Aorta (tissue), 5 donors: ENCODE measurements at regions of chr10 and their contacts with region 1.

Region 1: DNA sequence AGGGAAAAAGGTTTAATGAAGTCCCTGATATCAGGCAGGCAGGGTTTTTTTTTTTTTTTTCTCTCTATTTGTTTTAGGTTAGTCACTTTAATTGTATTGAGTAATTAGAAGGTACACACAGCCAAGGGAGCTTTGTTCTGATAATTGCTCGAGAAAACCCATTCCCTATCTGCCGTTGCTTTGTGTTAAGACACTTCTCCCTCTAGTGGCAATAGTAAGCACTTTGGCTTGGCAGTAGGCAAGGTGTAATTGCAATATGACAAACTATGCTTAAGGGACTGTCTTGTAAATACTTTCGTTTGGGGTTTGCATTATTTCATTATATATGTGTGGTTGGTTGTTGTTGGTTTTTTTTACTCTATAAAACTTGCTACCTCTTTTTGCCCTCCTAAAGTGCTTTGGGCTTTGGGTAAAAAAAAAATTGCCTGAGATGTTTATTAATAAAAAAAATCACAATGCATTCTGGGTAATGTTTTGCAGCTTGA is 113.4 kb downstream of the BTRC start:
- DNase-seq: no peak
- ATAC-seq: peak; percentile 68
- H3K4me3 ChIP-seq: no peak overlapping the region
- H3K27ac ChIP-seq: no peak overlapping the region
- H3K4me1 ChIP-seq: no peaks in the 10 kb centered on the region
- H3K27me3 ChIP-seq: no peaks in the 10 kb centered on the region

Region 2: DNA sequence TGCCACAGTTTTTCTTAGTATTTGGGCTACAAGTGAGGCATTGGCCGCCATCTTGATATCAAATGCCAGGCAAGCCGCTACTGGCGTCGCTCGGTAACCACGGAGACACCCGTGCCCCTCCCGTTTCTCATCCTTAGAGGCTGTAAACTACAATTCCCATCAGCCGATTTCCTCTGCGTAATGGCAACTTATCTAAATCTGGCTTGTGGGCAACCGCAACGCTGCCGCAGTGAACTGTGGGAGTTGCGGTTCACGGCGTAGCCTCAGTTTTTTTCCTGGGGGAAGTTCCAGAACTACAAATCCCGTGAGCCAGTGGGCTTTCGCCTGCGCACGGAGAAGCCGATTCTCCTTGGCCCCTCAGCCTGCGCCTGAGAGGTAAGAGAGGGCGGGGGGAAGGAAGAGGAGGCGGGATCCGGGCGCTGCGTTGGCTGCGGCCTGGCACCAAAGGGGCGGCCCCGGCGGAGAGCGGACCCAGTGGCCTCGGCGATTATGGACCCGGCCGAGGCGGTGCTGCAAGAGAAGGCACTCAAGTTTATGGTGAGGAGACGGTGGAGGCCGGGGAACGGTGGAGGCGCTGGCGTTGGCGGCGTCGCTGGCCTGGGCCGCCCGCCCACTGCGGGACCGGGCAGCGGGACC is 113.5 kb before region 1 on chr10 and contains the start of gene BTRC:
- intact Hi-C with region 1: loop called in 1 of 2 experiments (anchors 10 kb)
- DNase-seq: peak; percentile 98
- ATAC-seq: peak; percentile 100
- H3K4me3 ChIP-seq: peak within 1 kb of the TSS; percentile 68 to 69
- H3K27ac ChIP-seq: peak within 1 kb of the TSS in 1 of 2 donors; percentile 41
- H3K4me1 ChIP-seq: no peaks in the 10 kb centered on the region
- H3K27me3 ChIP-seq: no peaks in the 10 kb centered on the region
- total RNA-seq, gene BTRC: 16.6 to 21.0 TPM

Region 3: GRCh38 chr10:101397140-101397539 is 70.2 kb before region 1 on chr10:
- intact Hi-C with region 1: no loop called
- DNase-seq: no peak
- ATAC-seq: no peak
- H3K4me3 ChIP-seq: no peak overlapping the region
- H3K27ac ChIP-seq: no peak overlapping the region
- H3K4me1 ChIP-seq: peaks cover 0 to 2% of the 10 kb centered on the region in 2 donors
- H3K27me3 ChIP-seq: no peaks in the 10 kb centered on the region

Region 4: DNA sequence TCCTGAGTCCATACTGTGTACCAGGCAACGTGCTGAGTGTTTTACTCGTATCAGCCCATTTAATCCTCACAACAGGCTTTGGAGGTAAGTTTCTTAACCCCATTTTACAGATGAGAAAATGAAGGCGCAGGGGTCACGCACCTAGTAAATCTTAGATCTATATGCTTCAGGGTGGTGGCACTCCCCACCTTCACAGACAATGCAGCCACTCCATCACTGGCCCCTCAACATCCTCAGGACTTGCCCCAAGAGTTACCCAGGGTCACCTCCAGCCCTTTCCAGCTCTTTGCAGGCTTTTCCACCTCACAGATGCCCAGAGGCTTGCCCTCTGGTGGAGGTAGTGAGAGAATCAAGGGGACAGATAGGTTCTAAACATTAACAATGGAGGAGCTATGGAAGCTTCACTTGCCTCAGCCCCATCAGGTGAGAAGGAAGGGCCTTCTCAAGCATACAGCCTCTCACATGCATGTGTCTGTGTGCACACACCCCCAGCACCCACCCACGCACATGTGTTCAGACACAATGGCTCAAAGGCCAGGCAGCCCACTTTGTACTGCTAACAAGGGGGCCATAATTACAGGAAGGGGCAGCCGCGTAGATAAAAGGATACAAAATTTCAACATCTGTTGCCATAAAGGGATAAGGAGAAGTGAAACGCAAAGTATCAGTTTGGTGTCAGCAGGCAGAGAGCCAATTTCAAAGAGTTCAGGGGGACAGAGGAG is 149.9 kb after region 1 on chr10:
- intact Hi-C with region 1: no loop called
- DNase-seq: no peak
- ATAC-seq: no peak
- H3K4me3 ChIP-seq: no peak overlapping the region
- H3K27ac ChIP-seq: no peak overlapping the region
- H3K4me1 ChIP-seq: no peaks in the 10 kb centered on the region
- H3K27me3 ChIP-seq: no peaks in the 10 kb centered on the region